ENCODE measurements at regions of chr15 and their contacts with region 1.

Region 1: GRCh38 chr15:42494998-42495360 is 455 bp upstream of the SNAP23 start:
- DNase-seq: no peak
- ATAC-seq: peak; percentile 39
- H3K4me3 ChIP-seq: peak overlapping the region; percentile 97 to 99
- H3K27ac ChIP-seq: peak overlapping the region; percentile 93
- H3K4me1 ChIP-seq: peaks cover 33% of the 10 kb centered on the region
- H3K27me3 ChIP-seq: no peaks in the 10 kb centered on the region
- CTCF ChIP-seq: no peak

Region 2: GRCh38 chr15:42549741-42550392 is 54.9 kb after region 1 on chr15:
- CTCF ChIA-PET with region 1: no interaction called
- POLR2A ChIA-PET with region 1: interaction called, 11 read pairs
- in situ Hi-C with region 1: no loop called
- intact Hi-C with region 1: no loop called
- DNase-seq: no peak
- ATAC-seq: no peak
- H3K4me3 ChIP-seq: peak overlapping the region; percentile 83 to 100
- H3K27ac ChIP-seq: peak overlapping the region; percentile 94
- H3K4me1 ChIP-seq: peaks cover 27% of the 10 kb centered on the region
- H3K27me3 ChIP-seq: no peaks in the 10 kb centered on the region
- CTCF ChIP-seq: no peak

Region 3: GRCh38 chr15:42575188-42576039 is 80.4 kb after region 1 on chr15 and contains the start of gene STARD9:
- CTCF ChIA-PET with region 1: no interaction called
- POLR2A ChIA-PET with region 1: interaction called, 15 read pairs
- in situ Hi-C with region 1: no loop called
- intact Hi-C with region 1: no loop called
- DNase-seq: peak; percentile 88
- ATAC-seq: peak; percentile 97
- H3K4me3 ChIP-seq: peak within 1 kb of the TSS; percentile 81 to 90
- H3K27ac ChIP-seq: peak within 1 kb of the TSS; percentile 90
- H3K4me1 ChIP-seq: peaks cover 15% of the 10 kb centered on the region
- H3K27me3 ChIP-seq: no peaks in the 10 kb centered on the region
- CTCF ChIP-seq: no peak
- total RNA-seq, gene STARD9: 13.4 TPM

Region 4: GRCh38 chr15:42591238-42591934 is 96.4 kb after region 1 on chr15:
- CTCF ChIA-PET with region 1: no interaction called
- POLR2A ChIA-PET with region 1: interaction called, 12 read pairs
- in situ Hi-C with region 1: no loop called
- intact Hi-C with region 1: no loop called
- DNase-seq: no peak
- ATAC-seq: 0 out of 2 replicates have a peak, but pooled peaks have one; percentile 76
- H3K4me3 ChIP-seq: no peak overlapping the region
- H3K27ac ChIP-seq: no peak overlapping the region
- H3K4me1 ChIP-seq: no peaks in the 10 kb centered on the region
- H3K27me3 ChIP-seq: no peaks in the 10 kb centered on the region
- CTCF ChIP-seq: peak; percentile 43; the same call in 1 of the 2 replicates

Region 5: GRCh38 chr15:42800731-42801474 is 305.9 kb after region 1 on chr15:
- CTCF ChIA-PET with region 1: no interaction called
- POLR2A ChIA-PET with region 1: no interaction called
- in situ Hi-C with region 1: no loop called
- intact Hi-C with region 1: no loop called
- DNase-seq: no peak
- ATAC-seq: no peak
- H3K4me3 ChIP-seq: no peak overlapping the region
- H3K27ac ChIP-seq: no peak overlapping the region
- H3K4me1 ChIP-seq: no peaks in the 10 kb centered on the region
- H3K27me3 ChIP-seq: no peaks in the 10 kb centered on the region
- CTCF ChIP-seq: peak; percentile 64

Measured in Panc1 (cell line).